ENCODE measurements at regions of chr19 and their contacts with region 1.

Region 1: GRCh38 chr19:48874271-48875135 is 2.3 kb downstream of the PPP1R15A start:
- DNase-seq: no peak
- ATAC-seq: peak; percentile 18; the same call in 1 of the 2 replicates
- H3K4me3 ChIP-seq: peak overlapping the region; percentile 84 to 99
- H3K27ac ChIP-seq: peak overlapping the region; percentile 93
- H3K4me1 ChIP-seq: peaks cover 10% of the 10 kb centered on the region
- H3K27me3 ChIP-seq: no peaks in the 10 kb centered on the region
- CTCF ChIP-seq: no peak

Region 2: DNA sequence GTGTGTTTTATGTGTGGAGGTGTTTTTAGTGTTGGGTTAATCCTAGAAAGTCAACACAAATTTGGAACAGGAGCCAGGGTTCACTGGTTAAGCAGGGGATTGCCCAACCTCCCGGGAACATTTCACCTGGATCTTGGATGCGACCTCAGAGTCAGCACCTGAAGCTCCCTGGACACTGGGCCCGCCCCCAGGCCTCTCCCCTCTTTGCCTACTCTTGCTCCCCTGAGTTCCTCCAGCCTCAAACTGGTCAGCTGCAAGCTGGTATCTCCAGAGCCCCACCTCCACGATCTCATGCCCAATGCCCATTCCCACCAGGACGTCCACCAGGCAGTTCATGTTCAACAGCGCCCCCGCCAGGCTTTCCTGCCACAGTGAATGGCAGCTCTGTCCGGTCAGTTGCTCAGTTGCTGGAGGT is 47.9 kb before region 1 on chr19:
- CTCF ChIA-PET with region 1: no interaction called
- POLR2A ChIA-PET with region 1: interaction called, 16 read pairs
- in situ Hi-C with region 1: no loop called
- intact Hi-C with region 1: no loop called
- DNase-seq: no peak
- ATAC-seq: no peak
- H3K4me3 ChIP-seq: no peak overlapping the region
- H3K27ac ChIP-seq: no peak overlapping the region
- H3K4me1 ChIP-seq: no peaks in the 10 kb centered on the region
- H3K27me3 ChIP-seq: no peaks in the 10 kb centered on the region
- CTCF ChIP-seq: no peak

Region 3: DNA sequence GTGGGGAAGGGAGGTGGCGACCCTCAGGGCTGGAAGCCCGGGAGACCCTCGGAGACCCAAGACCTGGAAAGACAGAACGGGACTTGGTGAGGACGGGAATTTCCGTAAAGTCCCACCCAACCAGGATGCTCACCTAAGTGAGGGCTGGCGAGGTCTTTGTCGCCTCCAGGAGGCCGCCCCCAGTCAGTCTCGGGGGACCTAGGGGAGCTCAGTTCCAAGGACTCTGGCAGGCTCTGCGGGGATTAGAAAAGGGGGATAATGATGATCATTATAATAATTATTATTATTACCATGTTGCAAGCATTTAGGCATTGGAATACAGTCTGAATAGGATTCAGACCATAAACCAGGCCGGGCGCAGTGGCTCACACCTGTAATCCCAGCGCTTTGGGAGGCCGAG is 29.1 kb before region 1 on chr19:
- CTCF ChIA-PET with region 1: no interaction called
- POLR2A ChIA-PET with region 1: no interaction called
- in situ Hi-C with region 1: no loop called
- intact Hi-C with region 1: no loop called
- DNase-seq: no peak
- ATAC-seq: no peak
- H3K4me3 ChIP-seq: no peak overlapping the region
- H3K27ac ChIP-seq: no peak overlapping the region
- H3K4me1 ChIP-seq: no peaks in the 10 kb centered on the region
- H3K27me3 ChIP-seq: no peaks in the 10 kb centered on the region
- CTCF ChIP-seq: no peak

Region 4: DNA sequence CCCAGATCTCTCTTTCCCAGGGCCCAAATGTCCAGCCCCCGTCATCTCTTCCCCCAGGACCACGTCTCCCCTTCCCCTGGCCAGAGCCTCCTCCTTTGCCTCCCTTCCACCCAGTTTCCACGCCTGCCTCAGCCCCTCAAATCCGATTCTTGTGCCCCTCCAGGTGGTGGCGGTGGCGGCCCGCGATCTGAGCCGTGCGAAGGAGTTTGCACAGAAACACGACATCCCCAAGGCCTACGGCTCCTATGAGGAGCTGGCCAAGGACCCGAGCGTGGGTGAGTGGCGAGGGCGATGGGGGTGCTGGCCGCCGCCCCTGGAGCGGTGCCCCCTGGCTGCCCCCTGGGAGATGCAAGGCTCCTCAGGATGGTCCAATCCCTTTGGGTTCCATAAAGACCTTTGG is 60.3 kb after region 1 on chr19:
- CTCF ChIA-PET with region 1: no interaction called
- POLR2A ChIA-PET with region 1: no interaction called
- in situ Hi-C with region 1: no loop called
- intact Hi-C with region 1: no loop called
- DNase-seq: no peak
- ATAC-seq: peak; percentile 87
- H3K4me3 ChIP-seq: no peak overlapping the region
- H3K27ac ChIP-seq: no peak overlapping the region
- H3K4me1 ChIP-seq: no peaks in the 10 kb centered on the region
- H3K27me3 ChIP-seq: no peaks in the 10 kb centered on the region
- CTCF ChIP-seq: no peak; the same call in 1 of the 2 replicates

Region 5: GRCh38 chr19:49233163-49233562 is 358.7 kb after region 1 on chr19:
- CTCF ChIA-PET with region 1: no interaction called
- POLR2A ChIA-PET with region 1: interaction called, 10 read pairs
- in situ Hi-C with region 1: no loop called
- intact Hi-C with region 1: no loop called
- DNase-seq: no peak
- ATAC-seq: no peak
- H3K4me3 ChIP-seq: no peak overlapping the region
- H3K27ac ChIP-seq: no peak overlapping the region
- H3K4me1 ChIP-seq: no peaks in the 10 kb centered on the region
- H3K27me3 ChIP-seq: no peaks in the 10 kb centered on the region
- CTCF ChIP-seq: no peak

Measured in Panc1 (cell line).